ENCODE measurements at regions of chr18 and their contacts with region 1.

Region 1: DNA sequence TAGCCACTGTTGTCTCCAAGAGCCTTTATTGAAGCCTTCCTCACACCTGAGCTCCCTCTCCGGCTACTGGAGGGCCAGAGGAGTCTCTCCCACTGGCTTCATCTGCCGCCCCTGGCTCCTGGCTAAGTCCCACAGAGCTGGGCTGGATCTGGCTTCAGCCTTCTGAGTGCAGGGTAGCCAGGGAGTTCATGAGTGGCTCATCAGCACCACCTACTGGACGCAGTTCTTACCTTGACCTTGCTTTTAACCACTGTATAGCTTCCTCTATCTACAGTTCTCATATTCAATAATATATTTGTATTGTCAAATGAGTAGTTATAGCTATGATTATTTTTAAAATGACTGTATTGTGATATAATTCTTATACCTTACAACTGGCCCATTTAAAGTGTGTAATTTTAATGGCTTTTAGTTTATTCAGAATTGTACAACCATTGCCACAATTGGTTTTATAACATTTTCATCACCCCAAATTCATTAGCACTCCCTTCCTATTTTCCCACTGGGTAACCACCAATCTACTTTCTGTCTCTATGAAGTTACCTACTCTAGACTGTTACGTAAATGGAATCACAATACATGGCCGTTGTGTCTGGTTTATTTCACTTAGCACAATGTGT is 17.7 kb downstream of the CNDP1 start:
- DNase-seq: peak; percentile 60
- H3K4me3 Mint-ChIP-seq: no peak overlapping the region
- H3K27ac Mint-ChIP-seq: no peak overlapping the region
- H3K4me1 Mint-ChIP-seq: no peaks in the 10 kb centered on the region
- H3K27me3 Mint-ChIP-seq: peaks cover 8% of the 10 kb centered on the region

Region 2: DNA sequence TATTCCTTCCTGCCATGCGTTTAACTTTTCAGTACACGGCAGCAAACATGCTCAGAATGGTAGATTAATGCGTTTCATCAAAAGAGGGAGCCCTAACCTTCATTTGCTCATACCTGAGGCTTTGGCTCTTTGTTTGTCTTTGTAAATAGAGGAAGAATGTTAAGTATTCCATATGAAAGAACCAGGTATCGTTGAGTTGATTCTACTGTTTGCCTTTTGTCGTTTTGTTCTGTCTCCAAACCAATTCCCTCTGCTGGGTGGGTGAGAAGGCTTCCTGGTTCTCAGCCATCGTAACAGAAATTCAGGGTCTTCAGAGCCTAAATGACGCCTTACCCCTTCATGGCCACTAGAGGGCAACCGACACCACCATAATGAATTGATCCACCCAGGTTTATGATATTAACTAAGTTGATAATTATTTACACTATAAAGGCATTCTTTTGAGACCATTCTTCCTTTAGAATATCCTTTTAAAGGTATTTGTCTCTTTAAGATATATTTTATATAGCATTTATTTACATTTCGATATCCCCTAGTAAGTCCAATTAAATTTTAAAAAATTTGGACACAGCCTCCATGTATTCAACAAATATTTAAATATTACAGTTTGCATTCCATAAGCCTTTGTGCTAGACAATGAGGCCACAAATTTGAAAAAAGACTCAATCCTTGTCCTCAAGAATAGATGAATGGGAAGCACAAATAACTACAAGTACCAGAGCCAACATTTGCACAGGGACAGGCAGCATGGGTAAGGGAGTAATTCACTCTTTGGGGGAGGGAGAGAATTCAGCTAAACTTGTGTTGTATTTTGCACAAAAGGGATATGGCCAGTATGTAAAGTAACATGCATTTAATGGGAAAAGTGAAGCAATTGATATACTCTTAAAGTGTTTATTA is 355.6 kb before region 1 on chr18:
- intact Hi-C with region 1: loop called (anchors 1 kb)
- DNase-seq: peak; percentile 30
- H3K4me3 Mint-ChIP-seq: peak overlapping the region; percentile 73
- H3K27ac Mint-ChIP-seq: no peak overlapping the region
- H3K4me1 Mint-ChIP-seq: peaks cover 6% of the 10 kb centered on the region
- H3K27me3 Mint-ChIP-seq: peaks cover 7% of the 10 kb centered on the region

Region 3: GRCh38 chr18:74353169-74353775 is 198.8 kb before region 1 on chr18:
- intact Hi-C with region 1: loop called (anchors 1 kb)
- DNase-seq: peak; percentile 29
- H3K4me3 Mint-ChIP-seq: no peak overlapping the region
- H3K27ac Mint-ChIP-seq: no peak overlapping the region
- H3K4me1 Mint-ChIP-seq: peaks cover 18% of the 10 kb centered on the region
- H3K27me3 Mint-ChIP-seq: peaks cover 28% of the 10 kb centered on the region

Region 4: DNA sequence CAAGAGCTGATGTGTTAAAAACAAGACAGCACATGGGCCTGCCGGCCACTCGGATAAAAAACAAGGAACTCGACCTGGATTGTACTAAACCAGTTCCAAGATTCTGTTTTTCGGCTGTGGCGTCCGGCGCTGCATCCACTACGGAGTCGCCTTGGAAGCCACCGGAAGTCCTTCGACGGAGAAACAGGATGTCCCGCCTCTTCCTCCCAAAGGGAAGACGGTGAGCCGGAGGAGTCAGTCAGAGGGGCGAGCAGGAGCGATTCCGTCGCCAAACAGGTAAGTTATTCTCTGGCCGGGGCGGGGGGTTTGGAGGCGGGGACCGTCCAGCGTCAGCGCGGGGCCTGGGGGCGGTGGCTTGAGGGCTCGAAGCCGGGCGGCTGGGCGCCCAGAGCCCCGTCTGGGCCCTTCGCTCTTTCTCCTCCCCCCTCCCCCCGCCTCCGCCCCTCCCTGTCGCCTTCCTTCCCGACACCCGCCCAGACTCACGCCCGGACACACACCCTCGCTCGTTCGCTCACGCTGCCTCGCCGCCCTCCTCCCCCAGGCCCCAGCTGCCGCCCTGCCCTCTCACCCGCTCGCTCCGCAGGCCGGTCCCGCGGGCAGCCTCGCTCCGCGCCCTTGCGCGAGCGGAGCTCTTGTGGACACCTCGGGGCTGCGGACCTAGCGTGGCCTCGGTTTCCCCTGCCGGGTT is 45.8 kb after region 1 on chr18 and contains the start of gene ZNF407:
- intact Hi-C with region 1: no loop called
- DNase-seq: peak; percentile 85
- H3K4me3 Mint-ChIP-seq: peak within 1 kb of the TSS; percentile 96
- H3K27ac Mint-ChIP-seq: peak within 1 kb of the TSS; percentile 98
- H3K4me1 Mint-ChIP-seq: peaks cover 44% of the 10 kb centered on the region
- H3K27me3 Mint-ChIP-seq: no peaks in the 10 kb centered on the region
- total RNA-seq, gene ZNF407: 18.3 TPM in 2 replicates